Right cardiac atrium (tissue), 5 donors: ENCODE measurements at regions of chr3 and their contacts with region 1.

Region 1: GRCh38 chr3:52471371-52472238 is 16.2 kb downstream of the NISCH start:
- DNase-seq: peak; percentile 76 to 91 (median 90)
- ATAC-seq: peak; percentile 72 to 77
- H3K4me3 ChIP-seq: no peak overlapping the region
- H3K27ac ChIP-seq: no peak overlapping the region
- H3K4me1 ChIP-seq: peaks cover 5% of the 10 kb centered on the region
- H3K27me3 ChIP-seq: no peaks in the 10 kb centered on the region

Region 2: DNA sequence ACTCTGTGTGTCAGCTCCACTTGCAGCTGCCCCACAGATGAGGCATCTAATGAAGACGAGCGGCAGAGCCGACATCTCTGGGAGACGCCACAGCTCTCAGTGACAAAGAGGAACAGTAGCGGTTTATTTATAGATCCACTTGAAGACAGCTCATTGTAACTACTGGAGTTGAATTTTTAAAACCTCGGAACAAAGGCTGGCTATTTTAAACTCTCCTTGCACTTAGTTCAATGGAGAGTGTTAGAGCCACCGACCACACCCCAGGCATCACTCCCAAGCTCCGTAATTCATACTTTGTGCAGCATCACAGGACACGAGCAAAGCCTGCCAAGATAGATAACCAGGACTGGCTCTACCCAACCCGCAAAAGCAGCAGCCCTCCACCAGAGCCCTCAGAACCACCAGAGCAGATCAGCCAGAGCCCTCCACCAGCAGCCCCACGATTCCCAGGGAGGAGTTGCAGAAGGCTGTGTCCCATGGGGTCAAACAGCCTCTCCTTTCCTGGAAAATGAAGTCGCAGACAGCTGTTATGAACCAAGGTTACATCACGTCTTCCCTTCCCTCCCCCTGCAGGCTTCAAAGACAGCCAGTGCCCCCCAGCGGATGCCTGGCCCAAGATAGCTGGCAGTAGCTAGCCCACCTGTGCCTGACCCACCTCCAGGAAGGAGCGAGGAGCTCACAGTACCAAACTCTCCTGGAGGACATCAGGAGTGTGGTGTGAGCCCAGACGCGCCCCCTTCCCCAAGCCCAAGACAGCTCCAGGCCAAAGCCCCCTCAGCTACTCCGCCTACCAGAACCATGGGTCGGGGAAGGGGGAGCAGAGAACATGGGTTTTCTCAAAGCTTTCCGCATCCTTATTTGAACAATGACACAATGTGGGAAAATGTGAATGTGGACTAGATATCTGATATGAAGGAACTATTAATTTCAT is 363.0 kb before region 1 on chr3:
- intact Hi-C with region 1: no loop called
- DNase-seq: peak; percentile 64 to 85 (median 80)
- ATAC-seq: peak; percentile 73 to 81
- H3K4me3 ChIP-seq: no peak overlapping the region
- H3K27ac ChIP-seq: peak overlapping the region; percentile 89
- H3K4me1 ChIP-seq: peaks cover 14% of the 10 kb centered on the region
- H3K27me3 ChIP-seq: no peaks in the 10 kb centered on the region

Region 3: GRCh38 chr3:52536369-52537164 is 65.0 kb after region 1 on chr3 and contains the start of gene UQCC5:
- intact Hi-C with region 1: loop called in 3 of 4 experiments (anchors 5 kb)
- DNase-seq: peak; percentile 99
- ATAC-seq: peak; percentile 93 to 94
- H3K4me3 ChIP-seq: peak within 1 kb of the TSS; percentile 65
- H3K27ac ChIP-seq: peak within 1 kb of the TSS; percentile 91
- H3K4me1 ChIP-seq: peaks cover 16% of the 10 kb centered on the region
- H3K27me3 ChIP-seq: no peaks in the 10 kb centered on the region
- total RNA-seq, gene UQCC5: 52.4 to 64.2 (median 62.4) TPM

Region 4: DNA sequence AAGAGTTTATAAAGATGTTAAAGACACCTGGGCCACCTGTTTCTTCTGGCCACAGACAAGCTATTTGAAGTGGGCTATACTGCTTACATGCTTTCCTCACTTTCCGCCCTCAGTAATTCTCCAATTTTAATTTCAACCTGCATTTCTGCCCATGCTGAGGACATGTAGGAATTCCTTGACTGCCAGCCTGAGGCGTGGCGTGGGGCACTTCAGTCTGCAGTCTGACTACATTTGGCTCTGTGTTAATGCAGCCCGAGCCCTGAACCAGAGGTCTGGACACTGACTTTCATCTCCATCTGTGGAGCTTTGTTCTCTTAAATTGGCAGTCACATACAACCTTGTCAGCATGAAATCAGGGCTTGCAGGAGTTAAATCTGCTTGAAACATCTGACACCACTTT is 73.3 kb after region 1 on chr3:
- intact Hi-C with region 1: loop called in 1 of 4 experiments (anchors 5 kb)
- DNase-seq: no peak
- ATAC-seq: peak in 1 of 2 donors; percentile 68
- H3K4me3 ChIP-seq: no peak overlapping the region
- H3K27ac ChIP-seq: no peak overlapping the region
- H3K4me1 ChIP-seq: no peaks in the 10 kb centered on the region
- H3K27me3 ChIP-seq: no peaks in the 10 kb centered on the region

Region 5: GRCh38 chr3:52606373-52607085 is 134.9 kb after region 1 on chr3:
- intact Hi-C with region 1: loop called in 1 of 4 experiments (anchors 10 kb)
- DNase-seq: no peak
- ATAC-seq: peak; percentile 51 to 67
- H3K4me3 ChIP-seq: no peak overlapping the region
- H3K27ac ChIP-seq: no peak overlapping the region
- H3K4me1 ChIP-seq: no peaks in the 10 kb centered on the region
- H3K27me3 ChIP-seq: no peaks in the 10 kb centered on the region

Region 6: GRCh38 chr3:52685709-52686691 is 214.4 kb after region 1 on chr3 and contains the starts of genes GNL3 and PBRM1:
- intact Hi-C with region 1: loop called in 1 of 4 experiments (anchors 5 kb)
- DNase-seq: peak; percentile 94 to 98 (median 97)
- ATAC-seq: peak; percentile 88 to 89
- H3K4me3 ChIP-seq: peak within 1 kb of the TSS; percentile 69
- H3K27ac ChIP-seq: peak within 1 kb of the TSS; percentile 96
- H3K4me1 ChIP-seq: peaks cover 2% of the 10 kb centered on the region
- H3K27me3 ChIP-seq: no peaks in the 10 kb centered on the region
- total RNA-seq, gene GNL3: 25.2 to 43.9 (median 29.1) TPM
- total RNA-seq, gene PBRM1: 51.4 to 56.8 (median 55.6) TPM

Region 7: DNA sequence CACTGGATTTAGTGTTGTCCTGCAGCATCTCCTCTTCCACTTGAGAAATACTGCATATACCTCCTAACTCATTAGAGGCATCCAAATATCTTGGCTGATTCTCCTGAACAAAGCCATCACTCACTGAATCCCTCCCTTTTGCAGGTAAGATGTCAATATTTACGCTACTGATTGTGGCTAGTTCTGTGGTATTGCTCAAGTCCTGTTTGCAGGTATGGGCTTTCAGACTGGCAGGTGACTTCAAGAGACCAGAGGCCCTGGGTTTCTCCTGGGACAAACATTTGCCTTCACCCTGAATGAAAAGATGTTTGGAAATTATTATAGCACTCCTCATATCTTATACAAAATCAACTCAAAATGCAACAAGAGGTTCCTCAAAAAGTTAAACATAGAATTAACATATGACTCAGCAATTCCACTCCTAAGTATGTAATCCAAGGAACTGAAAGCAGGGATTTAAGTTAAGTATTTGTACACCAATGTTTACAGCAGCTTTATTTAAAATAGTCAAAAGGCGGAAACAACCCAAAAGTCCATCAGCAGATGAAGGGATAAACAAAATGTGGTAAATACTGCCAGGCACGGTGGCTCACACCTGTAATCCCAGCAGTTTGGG is 280.5 kb after region 1 on chr3:
- intact Hi-C with region 1: no loop called
- DNase-seq: no peak
- ATAC-seq: no peak
- H3K4me3 ChIP-seq: no peak overlapping the region
- H3K27ac ChIP-seq: no peak overlapping the region
- H3K4me1 ChIP-seq: no peaks in the 10 kb centered on the region
- H3K27me3 ChIP-seq: no peaks in the 10 kb centered on the region

Region 8: GRCh38 chr3:52845691-52846431 is 374.3 kb after region 1 on chr3:
- intact Hi-C with region 1: no loop called
- DNase-seq: peak in 2 of 3 donors; percentile 55 to 66
- ATAC-seq: peak; percentile 7 to 28
- H3K4me3 ChIP-seq: no peak overlapping the region
- H3K27ac ChIP-seq: peak overlapping the region; percentile 93
- H3K4me1 ChIP-seq: peaks cover 20% of the 10 kb centered on the region
- H3K27me3 ChIP-seq: no peaks in the 10 kb centered on the region

Region 9: GRCh38 chr3:53199834-53200233 is 728.2 kb after region 1 on chr3:
- intact Hi-C with region 1: no loop called
- DNase-seq: peak in 1 of 3 donors; percentile 14
- ATAC-seq: no peak
- H3K4me3 ChIP-seq: no peak overlapping the region
- H3K27ac ChIP-seq: no peak overlapping the region
- H3K4me1 ChIP-seq: no peaks in the 10 kb centered on the region
- H3K27me3 ChIP-seq: no peaks in the 10 kb centered on the region